Naive thymus-derived CD4-positive, alpha-beta T cell (primary cell): ENCODE measurements at regions of chr5 and their contacts with region 1.

Region 1: GRCh38 chr5:102583276-102584124 is 84.7 kb upstream of the SLCO6A1 start:
- DNase-seq: peak in 3 of 9 donors; percentile 0 to 7 (median 5)
- ATAC-seq: no peak
- H3K4me3 ChIP-seq: no peak overlapping the region
- H3K4me3 Mint-ChIP-seq: no peak overlapping the region
- H3K27ac ChIP-seq: no peak overlapping the region
- H3K27ac Mint-ChIP-seq: no peak overlapping the region
- H3K4me1 ChIP-seq: no peaks in the 10 kb centered on the region
- H3K4me1 Mint-ChIP-seq: no peaks in the 10 kb centered on the region
- H3K27me3 ChIP-seq: no peaks in the 10 kb centered on the region
- H3K27me3 Mint-ChIP-seq: peaks cover 0 to 11% (median 6%) of the 10 kb centered on the region in 5 donors

Region 2: DNA sequence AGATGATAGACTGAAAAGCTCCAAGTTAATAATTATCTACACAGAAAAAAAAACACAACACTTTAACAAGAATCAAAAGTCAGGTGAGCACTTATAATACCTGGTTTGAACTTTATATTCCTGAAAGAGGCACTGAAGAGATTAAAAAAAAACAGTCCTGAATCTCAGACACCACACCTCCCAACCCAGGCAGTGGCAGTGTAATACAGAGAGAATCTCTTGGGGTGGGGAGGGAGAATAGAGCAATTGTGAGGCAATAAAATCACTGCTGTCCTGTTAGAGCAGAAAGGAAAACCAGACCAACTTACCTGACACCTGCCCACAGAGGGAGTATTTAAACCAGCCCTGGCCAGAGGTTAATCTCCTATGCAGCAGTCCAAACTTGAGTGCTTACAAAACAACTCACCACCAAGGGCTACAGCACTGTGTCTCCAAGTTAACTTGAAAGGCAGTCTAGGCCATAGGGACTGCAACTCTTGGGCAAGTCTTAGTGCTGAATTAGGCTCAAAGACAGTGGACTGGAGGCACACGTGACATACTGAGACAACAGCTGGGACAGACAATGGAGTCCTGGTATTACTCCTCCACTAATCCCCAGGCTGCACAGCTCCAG is 341.6 kb before region 1 on chr5:
- CTCF ChIA-PET with region 1: no interaction called
- POLR2A ChIA-PET with region 1: no interaction called
- intact Hi-C with region 1: no loop called
- DNase-seq: no peak
- ATAC-seq: peak; percentile 14
- H3K4me3 ChIP-seq: no peak overlapping the region
- H3K4me3 Mint-ChIP-seq: no peak overlapping the region
- H3K27ac ChIP-seq: no peak overlapping the region
- H3K27ac Mint-ChIP-seq: no peak overlapping the region
- H3K4me1 ChIP-seq: no peaks in the 10 kb centered on the region
- H3K4me1 Mint-ChIP-seq: no peaks in the 10 kb centered on the region
- H3K27me3 ChIP-seq: no peaks in the 10 kb centered on the region
- H3K27me3 Mint-ChIP-seq: no peaks in the 10 kb centered on the region

Region 3: DNA sequence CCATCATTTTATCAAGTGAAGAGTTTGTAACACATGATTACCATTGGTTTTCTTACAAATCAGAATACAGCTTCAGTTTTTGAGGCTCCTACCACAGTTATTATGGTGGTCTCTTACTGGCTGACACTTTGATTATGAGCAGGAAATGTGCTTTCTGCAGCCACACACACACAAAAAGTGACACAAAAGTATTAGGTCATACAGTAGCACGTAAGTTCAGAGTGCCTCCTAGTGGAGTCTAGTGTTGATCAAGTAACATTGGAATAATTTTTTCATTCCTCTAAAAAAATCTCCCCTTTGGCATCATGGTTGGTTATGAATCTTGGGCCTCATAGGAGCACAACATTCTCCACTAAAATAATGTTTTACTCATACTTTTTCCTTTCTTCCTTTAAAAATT is 209.2 kb after region 1 on chr5:
- CTCF ChIA-PET with region 1: no interaction called
- POLR2A ChIA-PET with region 1: no interaction called
- intact Hi-C with region 1: loop called in 1 of 2 experiments (anchors 5 kb)
- DNase-seq: peak in 1 of 9 donors; percentile 11
- ATAC-seq: peak; percentile 63
- H3K4me3 ChIP-seq: no peak overlapping the region
- H3K4me3 Mint-ChIP-seq: no peak overlapping the region
- H3K27ac ChIP-seq: no peak overlapping the region
- H3K27ac Mint-ChIP-seq: no peak overlapping the region
- H3K4me1 ChIP-seq: no peaks in the 10 kb centered on the region
- H3K4me1 Mint-ChIP-seq: peaks cover 0 to 24% (median 5%) of the 10 kb centered on the region in 7 donors
- H3K27me3 ChIP-seq: no peaks in the 10 kb centered on the region
- H3K27me3 Mint-ChIP-seq: no peaks in the 10 kb centered on the region

Region 4: DNA sequence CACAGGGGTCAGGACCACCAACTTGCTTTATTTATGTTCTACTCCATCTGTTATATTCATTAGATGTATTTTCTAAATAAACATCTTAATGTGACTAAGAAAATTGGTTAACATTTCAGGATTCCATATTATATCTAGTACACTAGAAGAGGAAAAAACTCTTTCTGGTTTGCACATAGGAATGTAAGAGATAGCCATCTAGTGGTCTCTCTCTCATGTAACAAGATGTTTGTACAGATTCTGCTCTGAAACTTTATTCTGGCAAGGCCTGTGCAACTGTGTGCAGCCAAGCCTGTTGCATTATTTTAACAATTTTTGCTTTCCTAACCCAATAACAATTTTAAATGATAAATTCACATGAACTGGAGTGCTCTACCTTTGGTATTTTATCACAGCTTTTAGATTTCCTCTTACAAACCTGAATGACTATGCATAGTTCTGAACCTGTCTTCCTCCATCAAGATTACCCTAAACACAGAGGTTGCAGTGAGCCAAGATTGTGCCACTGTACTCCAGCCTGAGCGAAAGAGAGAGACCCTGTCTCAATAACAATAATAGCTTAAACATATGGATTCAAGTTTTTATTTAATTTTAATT is 388.3 kb after region 1 on chr5:
- CTCF ChIA-PET with region 1: no interaction called
- POLR2A ChIA-PET with region 1: no interaction called
- intact Hi-C with region 1: loop called in 1 of 2 experiments (anchors 5 kb)
- DNase-seq: peak in 1 of 9 donors; percentile 9
- ATAC-seq: no peak
- H3K4me3 ChIP-seq: no peak overlapping the region
- H3K4me3 Mint-ChIP-seq: no peak overlapping the region
- H3K27ac ChIP-seq: no peak overlapping the region
- H3K27ac Mint-ChIP-seq: no peak overlapping the region
- H3K4me1 ChIP-seq: no peaks in the 10 kb centered on the region
- H3K4me1 Mint-ChIP-seq: peaks cover 0 to 5% (median 0%) of the 10 kb centered on the region in 7 donors
- H3K27me3 ChIP-seq: no peaks in the 10 kb centered on the region
- H3K27me3 Mint-ChIP-seq: no peaks in the 10 kb centered on the region

Region 5: GRCh38 chr5:103224118-103224893 is 640.8 kb after region 1 on chr5:
- CTCF ChIA-PET with region 1: no interaction called
- POLR2A ChIA-PET with region 1: no interaction called
- intact Hi-C with region 1: loop called in 1 of 2 experiments (anchors 2 kb)
- DNase-seq: peak in 8 of 9 donors; percentile 10 to 60 (median 38)
- ATAC-seq: peak; percentile 97
- H3K4me3 ChIP-seq: no peak overlapping the region
- H3K4me3 Mint-ChIP-seq: peak overlapping the region in 1 of 10 donors; percentile 21
- H3K27ac ChIP-seq: no peak overlapping the region
- H3K27ac Mint-ChIP-seq: no peak overlapping the region
- H3K4me1 ChIP-seq: no peaks in the 10 kb centered on the region
- H3K4me1 Mint-ChIP-seq: peaks cover 0 to 5% (median 0%) of the 10 kb centered on the region in 7 donors
- H3K27me3 ChIP-seq: peaks cover 0 to 4% of the 10 kb centered on the region in 2 donors
- H3K27me3 Mint-ChIP-seq: peaks cover 11 to 46% (median 27%) of the 10 kb centered on the region in 5 donors

Region 6: DNA sequence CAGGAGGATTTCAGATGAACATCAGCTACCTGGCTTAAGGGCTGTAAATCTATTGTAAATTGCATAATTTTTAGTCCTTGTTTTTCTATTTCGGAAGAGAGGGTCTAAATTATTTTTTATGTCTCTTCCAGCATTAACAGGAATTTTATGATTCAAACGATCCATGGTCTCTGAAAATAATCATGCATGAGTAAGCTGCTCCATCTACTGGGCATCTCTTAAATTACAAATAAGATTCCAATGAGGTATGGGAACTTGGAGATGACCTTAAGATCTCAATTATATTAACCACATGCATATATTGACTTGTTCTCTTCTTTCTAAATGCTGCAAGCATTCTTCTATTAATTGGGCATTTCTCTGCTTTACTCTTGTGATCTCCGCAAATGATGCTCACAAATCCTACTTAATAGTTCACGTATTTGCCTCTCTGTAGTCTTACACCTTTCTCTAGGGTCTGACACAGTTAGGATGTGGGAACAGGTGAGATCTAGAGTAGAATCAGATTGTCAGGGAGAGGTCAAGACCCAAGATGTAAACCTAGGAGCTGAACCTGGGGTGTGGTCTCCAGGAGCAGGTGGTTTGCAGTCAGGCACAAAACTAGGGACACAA is 892.2 kb after region 1 on chr5:
- CTCF ChIA-PET with region 1: no interaction called
- POLR2A ChIA-PET with region 1: no interaction called
- intact Hi-C with region 1: loop called in 1 of 2 experiments (anchors 5 kb)
- DNase-seq: peak in 5 of 9 donors; percentile 11 to 33 (median 18)
- ATAC-seq: peak; percentile 49
- H3K4me3 ChIP-seq: no peak overlapping the region
- H3K4me3 Mint-ChIP-seq: no peak overlapping the region
- H3K27ac ChIP-seq: no peak overlapping the region
- H3K27ac Mint-ChIP-seq: no peak overlapping the region
- H3K4me1 ChIP-seq: no peaks in the 10 kb centered on the region
- H3K4me1 Mint-ChIP-seq: no peaks in the 10 kb centered on the region
- H3K27me3 ChIP-seq: no peaks in the 10 kb centered on the region
- H3K27me3 Mint-ChIP-seq: peaks cover 11 to 22% (median 16%) of the 10 kb centered on the region in 5 donors